ENCODE measurements at regions of chr11 and their contacts with region 1.

Region 1: DNA sequence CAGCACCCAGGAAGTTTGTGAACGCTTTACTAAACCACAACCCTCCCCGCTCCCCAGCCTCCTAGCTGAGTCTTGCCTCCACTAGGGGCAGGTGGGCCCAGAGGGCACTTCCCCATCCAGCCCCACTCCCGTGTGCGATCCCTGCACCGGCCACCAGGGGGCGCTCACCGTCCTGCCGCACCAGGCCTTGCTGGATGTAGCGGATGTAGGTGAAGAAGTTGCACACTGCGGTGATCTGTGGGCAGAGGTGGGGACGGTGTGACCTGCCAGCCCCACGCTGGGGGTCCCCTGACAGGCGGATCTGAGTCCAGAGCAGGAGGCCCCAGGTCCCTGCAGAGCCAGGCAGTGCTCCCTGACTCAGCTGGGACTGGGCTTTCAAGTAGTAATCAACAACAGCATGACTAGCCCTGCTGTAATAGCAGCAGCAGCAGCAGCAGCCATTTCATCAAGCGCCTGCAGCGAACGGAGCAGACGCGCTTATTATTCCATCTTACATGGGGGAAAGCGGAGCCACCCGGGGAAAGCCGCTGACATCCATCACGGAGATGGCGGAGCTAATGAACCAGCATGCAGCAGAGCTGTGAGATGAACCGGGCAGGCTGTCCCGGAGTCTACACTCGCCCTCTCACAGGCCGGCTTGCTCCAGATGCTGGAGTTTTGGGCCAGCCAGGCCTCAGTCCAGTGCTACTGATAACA is 7.9 kb upstream of the FADS3 start:
- DNase-seq: peak; percentile 96

Region 2: DNA sequence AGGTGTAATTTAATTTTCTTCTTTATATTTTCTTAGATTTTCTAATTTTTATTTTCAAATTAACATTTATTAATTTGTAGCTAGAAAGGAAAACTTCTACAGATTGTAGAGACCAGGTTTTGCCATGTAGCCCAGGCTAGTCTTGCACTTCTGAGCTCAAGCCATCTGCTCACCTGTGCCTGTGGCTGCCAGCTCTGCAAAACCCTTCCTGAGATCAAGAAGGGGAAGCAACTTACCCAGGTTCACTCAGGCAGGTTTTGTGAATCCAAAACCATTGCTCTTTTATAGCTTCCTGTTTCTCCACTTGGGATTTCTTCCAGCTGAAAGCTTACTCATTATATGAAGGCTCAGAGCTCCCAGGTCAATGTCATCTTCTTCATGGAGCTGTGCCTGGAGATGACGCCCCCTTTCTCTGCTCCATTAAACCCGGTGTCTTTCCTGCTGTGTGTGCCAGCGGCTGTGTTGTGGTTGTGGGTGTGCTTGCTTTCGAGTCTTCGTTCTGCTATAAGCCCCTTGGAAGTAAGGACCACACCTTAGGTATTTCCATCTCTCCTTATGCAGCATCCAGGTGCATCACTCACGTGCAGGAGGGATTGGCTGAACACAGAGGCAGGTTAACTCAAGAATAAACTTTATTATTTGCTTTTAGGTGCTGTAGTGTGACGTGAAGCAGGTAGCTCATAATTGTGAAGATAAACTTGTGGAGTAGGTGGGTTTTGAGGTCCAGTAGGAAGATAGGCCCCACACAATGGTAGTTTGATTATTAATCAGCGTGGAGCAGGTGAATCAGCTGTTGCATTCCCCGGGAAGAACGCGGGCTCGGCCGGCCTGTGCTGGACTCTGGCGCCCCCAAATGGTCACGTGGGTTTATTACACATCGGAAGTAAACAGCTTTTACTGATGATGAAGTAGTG is 182.3 kb after region 1 on chr11:
- intact Hi-C with region 1: loop called (anchors 5 kb)
- DNase-seq: peak; percentile 92

Measured in posterior vena cava (tissue), 2 donors.